Endothelial cell of umbilical vein (primary cell): ENCODE measurements at regions of chr14 and their contacts with region 1.

Region 1: DNA sequence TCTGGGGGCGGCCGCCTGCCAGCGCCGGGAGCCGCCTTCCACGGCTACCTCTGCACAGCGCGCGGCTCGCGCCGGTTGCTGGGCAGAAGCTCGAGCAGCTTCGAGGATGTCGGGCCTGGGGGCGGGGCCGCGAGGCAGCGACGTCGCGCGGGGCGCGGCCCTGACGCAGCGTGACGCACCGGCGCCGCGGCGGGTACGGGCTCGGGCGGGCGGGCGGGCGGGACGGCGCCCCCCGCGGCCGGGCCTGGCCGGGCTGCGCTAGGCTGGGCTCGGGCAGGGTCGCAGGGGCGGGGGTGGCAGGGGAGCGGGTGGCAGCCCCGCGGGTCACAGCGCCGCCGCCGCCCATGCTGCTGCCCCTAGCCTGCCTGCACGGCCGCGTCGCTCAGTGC is at the start of gene BTBD6:
- DNase-seq: peak; percentile 84
- H3K4me3 ChIP-seq: peak within 1 kb of the TSS; percentile 45 to 80 (median 52)
- H3K27ac ChIP-seq: peak within 1 kb of the TSS; percentile 74
- H3K4me1 ChIP-seq: peaks cover 7% of the 10 kb centered on the region
- H3K27me3 ChIP-seq: no peaks in the 10 kb centered on the region
- CTCF ChIP-seq: no peak
- POLR2A ChIP-seq: peak; percentile 73
- total RNA-seq, gene BTBD6: 57.7 and 63.1 TPM in 2 replicates

Region 2: DNA sequence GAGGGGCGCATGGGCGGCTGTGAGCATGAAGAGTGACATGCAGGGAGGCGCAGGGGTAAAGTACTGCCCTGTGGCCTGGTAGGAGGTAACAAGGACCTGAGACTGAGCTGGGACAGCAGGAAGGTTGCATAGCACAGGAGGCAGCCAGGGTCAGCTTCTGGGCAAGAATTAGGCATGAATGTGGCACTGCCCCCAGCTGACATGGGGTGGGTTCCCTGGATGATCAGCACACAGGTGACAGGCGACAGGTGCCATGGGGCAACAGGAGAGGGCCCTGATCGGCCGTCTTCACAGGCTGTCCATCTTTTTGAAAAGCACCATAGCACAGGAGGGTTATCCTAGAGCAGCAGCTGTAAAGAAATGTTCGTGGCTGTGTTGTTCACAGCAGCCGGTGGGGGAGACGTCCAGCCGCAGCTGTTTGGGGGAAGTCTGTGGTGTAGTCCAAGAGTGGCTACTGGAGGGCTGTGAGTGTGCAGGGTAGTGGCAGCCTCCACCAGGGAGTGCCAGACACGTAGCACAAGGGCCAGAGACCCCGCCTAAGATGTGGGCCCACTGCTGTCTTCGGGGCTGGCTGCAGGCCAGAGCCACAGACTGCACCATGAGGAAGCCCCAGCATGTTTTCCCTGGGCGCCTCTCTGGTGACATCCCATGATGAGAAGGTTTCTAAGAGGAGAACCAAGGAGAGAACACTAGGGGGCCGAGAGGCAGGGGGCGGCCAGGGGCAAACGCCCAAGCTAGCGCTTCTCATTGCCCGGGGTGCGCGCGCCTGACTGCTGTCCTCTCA is 254.4 kb before region 1 on chr14:
- CTCF ChIA-PET with region 1: no interaction called
- POLR2A ChIA-PET with region 1: no interaction called
- dilution Hi-C with region 1: no loop called
- intact Hi-C with region 1: no loop called
- DNase-seq: no peak
- H3K4me3 ChIP-seq: no peak overlapping the region
- H3K27ac ChIP-seq: no peak overlapping the region
- H3K4me1 ChIP-seq: no peaks in the 10 kb centered on the region
- H3K27me3 ChIP-seq: no peaks in the 10 kb centered on the region
- CTCF ChIP-seq: no peak
- POLR2A ChIP-seq: no peak

Region 3: DNA sequence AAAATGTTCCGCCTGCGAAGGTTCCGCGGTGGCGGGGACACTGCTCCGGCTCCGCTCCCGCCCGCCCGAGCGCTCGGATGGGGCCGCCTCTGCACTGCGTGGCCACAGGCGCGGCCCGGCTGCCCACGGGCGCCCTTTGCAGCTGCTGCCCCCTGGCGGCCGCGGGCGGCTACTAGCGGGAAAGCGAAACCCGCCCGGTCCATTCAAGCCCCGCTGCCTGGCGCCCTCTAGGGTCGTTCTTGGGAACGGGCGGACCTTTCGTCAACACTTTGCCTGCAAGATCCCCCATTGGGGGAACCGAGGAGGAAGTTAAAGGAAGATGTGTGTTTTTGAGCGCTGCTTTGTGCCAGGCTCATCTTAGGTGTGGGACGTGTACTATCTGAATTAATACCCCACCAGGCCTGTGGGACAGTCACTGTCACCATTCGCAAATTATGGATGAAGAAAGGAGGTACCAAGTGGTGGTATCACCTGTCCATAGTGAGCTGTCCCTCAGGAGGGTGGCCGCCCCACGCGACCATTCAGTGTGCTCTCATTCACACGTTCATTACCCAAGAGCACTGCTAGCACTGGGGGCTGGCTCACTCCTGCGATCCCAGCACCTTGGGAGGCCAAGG is 202.5 kb before region 1 on chr14:
- CTCF ChIA-PET with region 1: no interaction called
- POLR2A ChIA-PET with region 1: no interaction called
- dilution Hi-C with region 1: no loop called
- intact Hi-C with region 1: no loop called
- DNase-seq: peak; percentile 81
- H3K4me3 ChIP-seq: no peak overlapping the region
- H3K27ac ChIP-seq: no peak overlapping the region
- H3K4me1 ChIP-seq: no peaks in the 10 kb centered on the region
- H3K27me3 ChIP-seq: peaks cover 3 to 9% of the 10 kb centered on the region in 2 experiments
- CTCF ChIP-seq: peak; percentile 100
- POLR2A ChIP-seq: no peak

Region 4: DNA sequence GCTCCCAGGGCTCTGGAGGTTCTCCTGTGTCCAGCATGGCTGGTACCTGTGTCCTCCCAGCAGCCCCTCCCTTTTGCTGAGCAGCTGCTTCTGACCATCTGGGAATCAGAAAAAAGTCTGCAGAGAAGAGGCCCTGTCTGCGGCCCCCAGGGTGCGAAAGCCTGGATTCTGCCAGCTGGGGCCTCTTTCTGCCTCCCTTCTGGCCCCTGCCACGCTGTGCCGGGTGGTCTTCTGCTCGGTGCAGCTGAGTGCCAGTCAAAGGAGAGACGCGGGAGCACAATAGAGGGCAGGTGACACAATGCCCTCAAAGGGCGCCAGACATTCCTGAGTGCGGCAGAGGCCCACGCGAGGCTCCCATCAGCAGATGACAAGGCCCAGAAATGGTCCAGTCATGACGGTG is 12.6 kb after region 1 on chr14:
- CTCF ChIA-PET with region 1: interaction called, 10 read pairs
- POLR2A ChIA-PET with region 1: no interaction called
- dilution Hi-C with region 1: no loop called
- intact Hi-C with region 1: no loop called
- DNase-seq: no peak
- H3K4me3 ChIP-seq: no peak overlapping the region
- H3K27ac ChIP-seq: no peak overlapping the region
- H3K4me1 ChIP-seq: no peaks in the 10 kb centered on the region
- H3K27me3 ChIP-seq: no peaks in the 10 kb centered on the region
- CTCF ChIP-seq: no peak
- POLR2A ChIP-seq: no peak

Region 5: DNA sequence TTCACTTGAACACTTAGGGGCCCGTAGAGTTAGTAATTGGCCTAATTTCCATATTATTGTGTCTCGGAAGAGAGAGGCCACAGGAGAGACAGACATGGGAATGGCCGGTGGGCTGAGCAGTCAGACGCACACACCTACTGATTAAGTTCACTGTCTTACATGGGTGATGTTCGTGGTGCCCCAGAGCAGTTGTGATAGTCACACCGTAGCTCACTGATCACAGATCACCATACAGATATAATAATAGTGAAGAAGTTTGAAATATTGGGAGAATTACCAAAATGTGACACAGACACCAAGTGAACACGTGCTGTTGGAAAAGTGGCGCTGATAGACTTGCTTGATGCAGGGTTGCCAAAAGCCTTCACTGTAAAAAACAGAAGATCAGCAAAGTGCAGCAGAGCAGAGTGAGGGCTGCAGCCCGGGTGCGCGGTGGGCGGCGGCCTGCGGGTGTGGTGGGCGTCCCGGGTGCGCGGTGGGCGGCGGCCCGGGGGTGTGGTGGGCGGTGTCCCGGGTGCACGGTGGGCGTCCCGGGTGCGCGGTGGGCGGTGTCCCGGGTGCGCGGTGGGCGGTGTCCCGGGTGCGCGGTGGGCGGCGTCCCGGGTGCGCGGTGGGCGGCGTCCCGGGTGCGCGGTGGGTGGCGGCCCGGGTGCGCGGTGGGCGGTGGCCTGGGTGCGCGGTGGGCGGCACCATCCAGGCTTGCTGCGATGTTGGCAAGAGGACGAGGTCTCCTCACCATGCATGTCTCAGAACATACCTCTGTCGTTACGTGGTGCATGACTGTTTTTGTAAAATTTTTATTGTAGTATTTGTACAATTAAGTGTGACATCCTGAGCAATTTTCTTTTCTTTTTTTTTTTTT is 115.7 kb after region 1 on chr14:
- CTCF ChIA-PET with region 1: no interaction called
- POLR2A ChIA-PET with region 1: no interaction called
- dilution Hi-C with region 1: no loop called
- intact Hi-C with region 1: no loop called
- DNase-seq: no peak
- H3K4me3 ChIP-seq: no peak overlapping the region
- H3K27ac ChIP-seq: no peak overlapping the region
- H3K4me1 ChIP-seq: no peaks in the 10 kb centered on the region
- H3K27me3 ChIP-seq: no peaks in the 10 kb centered on the region
- CTCF ChIP-seq: no peak
- POLR2A ChIP-seq: no peak